Activated CD8-positive, alpha-beta T cell treated with anti-CD3 and anti-CD28 coated beads, Interleukin-2, amount 10 ng/mL, durations not matched to agents 7 days and 5 days (primary cell): ENCODE measurements at regions of chr2 and their contacts with region 1.

Region 1: GRCh38 chr2:201118121-201118960 is 2.4 kb downstream of the CFLAR start:
- DNase-seq: peak; percentile 93
- ATAC-seq: peak; percentile 45
- H3K4me3 Mint-ChIP-seq: peak overlapping the region; percentile 97
- H3K27ac Mint-ChIP-seq: peak overlapping the region; percentile 99
- H3K4me1 Mint-ChIP-seq: peaks cover 56% of the 10 kb centered on the region
- H3K27me3 Mint-ChIP-seq: no peaks in the 10 kb centered on the region

Region 2: GRCh38 chr2:200888704-200889625 is 229.4 kb before region 1 on chr2 and contains the starts of genes NIF3L1 and PPIL3:
- CTCF ChIA-PET with region 1: interaction called, 9 read pairs
- POLR2A ChIA-PET with region 1: interaction called, 37 read pairs
- DNase-seq: peak; percentile 99
- ATAC-seq: peak; percentile 86
- H3K4me3 Mint-ChIP-seq: peak within 1 kb of the TSS; percentile 90
- H3K27ac Mint-ChIP-seq: peak within 1 kb of the TSS; percentile 98
- H3K4me1 Mint-ChIP-seq: peaks cover 49% of the 10 kb centered on the region
- H3K27me3 Mint-ChIP-seq: no peaks in the 10 kb centered on the region
- total RNA-seq, gene NIF3L1: 37.0 to 39.0 TPM
- total RNA-seq, gene PPIL3: 81.6 to 82.9 TPM

Region 3: DNA sequence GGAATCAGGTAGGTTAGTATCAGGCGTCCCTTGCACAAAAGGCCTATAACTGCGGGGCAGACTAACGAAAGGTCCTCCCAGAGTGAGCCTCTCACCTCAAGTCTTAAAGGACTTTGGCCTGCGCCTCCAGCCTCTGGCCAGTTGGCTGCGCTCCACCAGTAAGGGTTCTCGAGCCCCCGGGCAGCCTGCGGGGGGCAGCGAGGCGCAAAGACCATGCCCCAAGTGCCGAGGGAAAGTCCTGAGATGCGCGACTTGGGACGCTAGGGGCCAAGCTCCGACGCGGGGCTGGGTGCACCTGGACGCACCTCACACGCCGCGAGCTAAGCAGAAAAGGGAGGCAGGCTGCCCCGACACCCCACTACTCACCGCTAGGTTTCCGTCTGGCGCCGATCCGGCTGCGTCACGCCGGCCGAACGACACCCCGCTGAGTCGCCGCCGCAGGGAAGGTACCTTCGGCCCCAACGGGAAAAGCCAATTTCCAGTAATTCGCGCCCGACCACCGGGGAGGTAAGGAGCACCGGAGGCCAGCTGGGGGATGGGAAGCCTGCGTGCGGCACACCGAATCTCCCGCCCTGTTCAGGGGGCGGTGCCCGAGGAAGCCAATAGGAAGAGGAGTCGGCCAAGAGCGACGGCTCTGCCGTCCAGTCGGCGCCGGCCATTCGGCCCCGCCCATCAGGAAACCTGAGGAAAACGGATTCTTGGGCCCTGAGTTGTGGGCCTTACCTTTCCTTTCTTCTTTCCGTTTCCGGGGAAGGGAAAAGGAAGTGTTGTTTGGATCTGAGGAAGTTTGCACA is 155.0 kb before region 1 on chr2 and contains the start of gene ORC2:
- CTCF ChIA-PET with region 1: interaction called, 18 read pairs
- POLR2A ChIA-PET with region 1: interaction called, 13 read pairs
- DNase-seq: peak; percentile 94
- ATAC-seq: peak; percentile 97
- H3K4me3 Mint-ChIP-seq: peak within 1 kb of the TSS; percentile 93
- H3K27ac Mint-ChIP-seq: peak within 1 kb of the TSS; percentile 97
- H3K4me1 Mint-ChIP-seq: peaks cover 63% of the 10 kb centered on the region
- H3K27me3 Mint-ChIP-seq: no peaks in the 10 kb centered on the region
- total RNA-seq, gene ORC2: 47.4 to 57.2 TPM

Region 4: DNA sequence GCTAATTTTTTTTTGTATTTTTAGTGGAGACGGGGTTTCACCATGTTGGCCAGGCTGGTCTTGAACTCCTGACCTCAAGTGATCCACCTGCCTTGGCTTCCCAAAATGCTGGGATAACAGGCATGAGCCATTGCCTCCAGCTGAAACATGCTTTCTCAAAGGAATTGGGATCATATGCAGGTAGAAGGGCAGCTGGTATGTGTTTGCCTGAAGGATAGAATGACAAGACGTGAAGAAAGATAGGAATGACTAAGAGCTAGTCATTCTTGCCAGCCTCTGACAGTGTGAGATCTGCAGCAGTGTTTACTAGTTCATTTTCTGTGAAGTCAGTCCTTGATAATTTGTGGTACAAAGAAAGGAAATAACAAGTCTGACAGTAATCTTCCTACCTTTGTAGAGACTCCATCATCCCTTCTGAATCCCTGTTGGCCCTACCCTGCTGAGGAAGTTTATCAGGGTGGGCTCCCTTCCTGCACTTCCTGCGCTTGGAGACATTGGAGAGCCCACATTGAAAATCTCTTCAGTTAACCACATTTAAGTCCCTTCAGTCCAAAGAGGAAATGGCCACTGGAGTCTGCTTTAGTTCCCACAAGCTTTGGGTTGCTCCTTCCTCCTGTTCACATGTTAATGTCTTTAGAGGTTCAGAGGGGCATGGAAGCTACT is 12.3 kb after region 1 on chr2:
- CTCF ChIA-PET with region 1: interaction called, 3 read pairs
- POLR2A ChIA-PET with region 1: interaction called, 238 read pairs
- DNase-seq: peak; percentile 43
- ATAC-seq: peak; percentile 48
- H3K4me3 Mint-ChIP-seq: peak overlapping the region; percentile 62
- H3K27ac Mint-ChIP-seq: peak overlapping the region; percentile 85
- H3K4me1 Mint-ChIP-seq: peaks cover 72% of the 10 kb centered on the region
- H3K27me3 Mint-ChIP-seq: no peaks in the 10 kb centered on the region

Region 5: DNA sequence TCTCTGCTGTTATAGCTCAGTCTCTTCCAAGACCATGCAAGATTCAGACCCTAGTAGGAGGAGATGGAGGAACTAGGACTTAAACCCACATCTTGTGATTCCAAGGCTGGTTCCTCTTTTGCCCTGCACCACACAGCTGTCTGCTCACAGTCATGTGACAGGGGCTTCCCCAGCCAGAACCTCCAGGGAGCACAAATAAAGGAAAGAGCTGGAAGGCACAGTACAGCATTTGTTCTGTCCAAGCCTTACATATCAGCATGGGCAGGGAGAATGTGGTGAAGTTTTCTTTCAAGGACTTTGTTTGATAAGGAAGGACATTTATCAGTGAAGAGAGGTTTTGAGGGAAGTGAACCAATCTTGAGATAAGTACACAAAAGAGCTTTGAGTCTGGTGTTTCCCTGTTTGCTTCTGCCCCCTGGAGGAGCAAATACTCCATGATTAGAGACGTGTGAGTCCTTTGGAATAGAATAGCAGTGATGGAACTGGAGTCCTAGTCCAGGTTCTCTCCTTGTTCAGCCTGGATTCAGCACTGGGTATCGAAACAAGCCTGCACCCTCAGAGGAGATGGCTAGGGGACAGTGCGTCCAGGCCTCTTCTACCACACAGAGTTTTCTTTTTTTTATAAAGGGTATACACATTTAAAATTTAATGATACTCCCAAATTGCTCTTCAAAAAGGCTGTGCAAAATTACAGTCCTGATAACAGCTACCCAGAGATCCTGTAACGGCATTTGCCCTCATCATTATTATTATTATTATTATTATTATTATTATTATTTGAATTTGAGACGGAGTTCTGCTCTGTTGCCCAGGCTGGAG is 40.0 kb after region 1 on chr2:
- CTCF ChIA-PET with region 1: interaction called, 83 read pairs
- POLR2A ChIA-PET with region 1: interaction called, 45 read pairs
- DNase-seq: peak; percentile 80
- ATAC-seq: peak; percentile 90
- H3K4me3 Mint-ChIP-seq: no peak overlapping the region
- H3K27ac Mint-ChIP-seq: peak overlapping the region; percentile 76
- H3K4me1 Mint-ChIP-seq: peaks cover 11% of the 10 kb centered on the region
- H3K27me3 Mint-ChIP-seq: no peaks in the 10 kb centered on the region

Region 6: GRCh38 chr2:201344663-201345366 is 226.5 kb after region 1 on chr2:
- CTCF ChIA-PET with region 1: no interaction called
- POLR2A ChIA-PET with region 1: no interaction called
- DNase-seq: no peak
- ATAC-seq: peak; percentile 39
- H3K4me3 Mint-ChIP-seq: no peak overlapping the region
- H3K27ac Mint-ChIP-seq: no peak overlapping the region
- H3K4me1 Mint-ChIP-seq: peaks cover 9% of the 10 kb centered on the region
- H3K27me3 Mint-ChIP-seq: no peaks in the 10 kb centered on the region